Activated CD4-positive, alpha-beta memory T cell treated with anti-CD3 and anti-CD28 coated beads for 36 hours (primary cell): ENCODE measurements at regions of chr11 and their contacts with region 1.

Region 1: DNA sequence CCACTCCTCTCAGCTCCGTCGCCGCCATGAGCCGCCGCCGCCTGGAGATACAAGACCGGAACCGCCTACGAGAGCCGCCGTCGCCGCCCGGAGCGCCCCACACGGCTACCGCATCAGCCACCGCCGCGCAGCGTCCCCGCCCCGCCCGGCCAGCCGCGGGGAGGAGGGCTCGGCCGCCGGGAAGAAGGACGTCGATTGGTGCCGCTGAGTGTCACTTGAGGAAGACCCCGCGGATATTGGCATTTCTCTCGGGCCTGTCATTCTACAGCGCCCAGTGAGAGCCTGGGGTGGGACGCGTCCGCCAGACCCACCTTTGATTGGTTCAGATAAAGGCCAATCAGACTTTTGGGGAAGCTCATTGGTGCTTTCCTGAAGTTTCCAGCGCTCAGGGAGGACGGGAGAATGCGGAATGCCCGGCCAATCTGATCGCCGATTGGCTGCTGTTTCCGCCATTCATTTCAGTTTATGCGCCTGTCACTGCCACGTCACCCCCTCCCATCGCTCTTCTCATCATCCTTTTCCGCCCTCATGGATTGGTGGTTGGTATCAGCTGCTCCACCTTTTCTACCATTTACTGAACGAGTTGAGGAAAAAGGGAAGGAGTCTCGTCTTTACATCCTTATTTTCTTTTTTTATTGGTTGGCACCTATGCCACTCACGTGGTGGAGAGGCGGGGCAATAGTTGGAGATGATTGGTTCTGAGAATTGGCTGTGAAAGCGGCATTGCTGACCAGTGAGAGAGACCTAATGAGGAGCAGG is at the start of gene OSBP:
- DNase-seq: peak; percentile 99
- H3K4me3 Mint-ChIP-seq: peak within 1 kb of the TSS; percentile 89
- H3K27ac Mint-ChIP-seq: peak within 1 kb of the TSS; percentile 95
- H3K4me1 Mint-ChIP-seq: peaks cover 41% of the 10 kb centered on the region
- H3K27me3 Mint-ChIP-seq: no peaks in the 10 kb centered on the region
- total RNA-seq, gene OSBP: 37.2 to 40.9 TPM

Region 2: GRCh38 chr11:59152312-59152951 is 463.4 kb before region 1 on chr11:
- CTCF ChIA-PET with region 1: no interaction called
- POLR2A ChIA-PET with region 1: no interaction called
- intact Hi-C with region 1: loop called (anchors 5 kb)
- DNase-seq: peak; percentile 55
- H3K4me3 Mint-ChIP-seq: peak overlapping the region; percentile 53
- H3K27ac Mint-ChIP-seq: peak overlapping the region; percentile 92
- H3K4me1 Mint-ChIP-seq: peaks cover 41% of the 10 kb centered on the region
- H3K27me3 Mint-ChIP-seq: no peaks in the 10 kb centered on the region

Region 3: GRCh38 chr11:59550368-59550841 is 65.4 kb before region 1 on chr11:
- CTCF ChIA-PET with region 1: no interaction called
- POLR2A ChIA-PET with region 1: interaction called, 8 read pairs
- intact Hi-C with region 1: loop called (anchors 1 kb)
- DNase-seq: peak; percentile 91
- H3K4me3 Mint-ChIP-seq: peak overlapping the region; percentile 85
- H3K27ac Mint-ChIP-seq: peak overlapping the region; percentile 97
- H3K4me1 Mint-ChIP-seq: peaks cover 30% of the 10 kb centered on the region
- H3K27me3 Mint-ChIP-seq: peaks cover 7% of the 10 kb centered on the region

Region 4: DNA sequence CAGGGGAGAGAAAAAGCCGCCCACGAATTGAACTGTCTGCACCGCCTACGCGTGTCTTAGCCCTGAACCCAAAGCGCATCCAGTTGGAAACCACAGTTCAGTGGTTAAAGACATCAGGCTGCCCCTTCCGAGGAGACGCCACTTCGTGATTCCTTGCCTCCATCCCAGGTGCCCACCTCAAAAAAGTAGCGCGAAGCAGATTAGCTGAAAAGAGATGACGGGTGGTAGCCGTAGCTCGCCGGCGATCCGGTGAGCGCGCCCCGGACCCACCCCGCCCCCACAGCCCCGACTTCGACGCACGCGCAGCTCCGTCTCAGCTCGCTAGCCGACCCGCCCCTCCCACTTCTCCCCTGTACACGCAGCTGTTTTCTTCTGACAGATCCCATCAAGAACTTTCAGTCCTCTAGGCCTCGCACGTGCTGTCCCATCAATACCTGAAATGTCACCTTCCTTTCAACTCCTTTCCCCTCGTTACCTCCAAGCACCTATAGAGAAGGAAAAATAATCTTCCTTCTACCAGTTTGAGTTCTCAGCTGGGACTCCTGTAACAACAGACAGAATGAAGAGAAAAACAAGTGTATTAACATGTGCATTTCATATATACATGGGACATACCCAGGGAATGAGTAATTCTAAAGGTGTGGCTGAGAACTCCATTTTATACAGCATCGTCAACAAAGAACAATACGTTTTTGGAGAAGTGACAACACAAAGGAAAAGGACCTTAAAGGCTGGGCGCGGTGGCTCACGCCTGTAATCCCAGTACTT is 54.9 kb before region 1 on chr11:
- CTCF ChIA-PET with region 1: no interaction called
- POLR2A ChIA-PET with region 1: interaction called, 6 read pairs
- intact Hi-C with region 1: loop called (anchors 1 kb)
- DNase-seq: peak; percentile 90
- H3K4me3 Mint-ChIP-seq: peak overlapping the region; percentile 93
- H3K27ac Mint-ChIP-seq: peak overlapping the region; percentile 96
- H3K4me1 Mint-ChIP-seq: peaks cover 42% of the 10 kb centered on the region
- H3K27me3 Mint-ChIP-seq: peaks cover 4% of the 10 kb centered on the region

Region 5: GRCh38 chr11:59668950-59669610 is 53.3 kb after region 1 on chr11 and contains the start of gene PATL1:
- CTCF ChIA-PET with region 1: interaction called, 12 read pairs
- POLR2A ChIA-PET with region 1: interaction called, 23 read pairs
- intact Hi-C with region 1: loop called (anchors 1 kb)
- DNase-seq: peak; percentile 99
- H3K4me3 Mint-ChIP-seq: peak within 1 kb of the TSS; percentile 95
- H3K27ac Mint-ChIP-seq: peak within 1 kb of the TSS; percentile 97
- H3K4me1 Mint-ChIP-seq: peaks cover 39% of the 10 kb centered on the region
- H3K27me3 Mint-ChIP-seq: no peaks in the 10 kb centered on the region
- total RNA-seq, gene PATL1: 58.3 to 62.3 TPM

Region 6: GRCh38 chr11:59810189-59810910 is 194.5 kb after region 1 on chr11 and contains the start of gene MRPL16:
- CTCF ChIA-PET with region 1: no interaction called
- POLR2A ChIA-PET with region 1: no interaction called
- intact Hi-C with region 1: loop called (anchors 5 kb)
- DNase-seq: peak; percentile 95
- H3K4me3 Mint-ChIP-seq: peak within 1 kb of the TSS; percentile 90
- H3K27ac Mint-ChIP-seq: peak within 1 kb of the TSS; percentile 86
- H3K4me1 Mint-ChIP-seq: peaks cover 20% of the 10 kb centered on the region
- H3K27me3 Mint-ChIP-seq: no peaks in the 10 kb centered on the region
- total RNA-seq, gene MRPL16: 80.2 to 80.5 TPM

Region 7: DNA sequence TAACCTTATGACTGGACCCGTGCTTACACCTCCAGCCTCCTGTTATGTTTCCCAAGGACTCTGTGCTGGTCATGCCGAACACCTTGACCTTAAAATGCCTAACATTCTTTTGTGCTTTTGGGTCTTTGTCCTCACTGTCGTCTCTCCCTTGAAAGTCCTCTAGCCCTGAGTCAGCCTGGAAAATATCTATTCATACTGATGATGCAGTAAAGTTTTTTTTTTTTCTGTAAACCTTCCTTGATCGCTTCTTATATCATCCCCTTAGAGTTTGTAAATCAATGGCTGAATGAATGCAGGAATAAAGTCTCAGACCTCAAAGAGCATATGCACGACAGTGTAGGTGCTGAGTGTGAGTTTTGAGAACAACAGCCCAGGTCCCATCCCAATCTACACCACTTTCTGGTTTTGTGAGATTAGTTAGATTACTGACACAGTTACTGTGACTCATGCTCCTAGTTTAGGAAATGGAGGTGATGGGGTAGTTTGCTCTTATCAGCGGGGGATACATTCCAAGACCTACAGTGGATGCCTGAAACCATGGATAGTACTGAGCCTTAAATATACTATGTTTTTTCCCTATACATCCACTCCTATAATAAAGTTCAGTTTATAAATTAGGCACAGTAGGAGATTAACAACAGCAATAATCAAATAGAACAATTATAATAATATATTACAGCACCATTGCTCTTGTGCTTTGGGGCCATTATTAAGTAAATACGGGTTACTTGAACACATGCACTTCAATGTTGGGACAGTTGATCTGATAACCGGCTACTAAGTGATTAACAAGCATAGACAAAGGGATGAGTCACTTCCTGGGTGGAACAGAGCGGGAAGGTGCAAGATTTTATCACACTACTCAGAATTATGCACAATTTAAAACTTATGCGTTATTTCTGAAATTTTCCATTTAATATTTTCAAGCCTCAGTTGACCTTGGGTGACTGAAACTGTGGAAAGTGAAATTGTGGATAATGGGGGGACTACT is 241.9 kb after region 1 on chr11:
- CTCF ChIA-PET with region 1: no interaction called
- POLR2A ChIA-PET with region 1: no interaction called
- intact Hi-C with region 1: no loop called
- DNase-seq: peak; percentile 47
- H3K4me3 Mint-ChIP-seq: peak overlapping the region; percentile 21
- H3K27ac Mint-ChIP-seq: peak overlapping the region; percentile 80
- H3K4me1 Mint-ChIP-seq: peaks cover 29% of the 10 kb centered on the region
- H3K27me3 Mint-ChIP-seq: no peaks in the 10 kb centered on the region